Activated T-helper 2 cell treated with anti-CD3 and anti-CD28 coated beads, Interferon-gamma antibody, Interleukin-2, Interleukin-4, amounts not matched to agents 10 μg/mL and 5 μg/mL and 100 μg/mL, durations not matched to agents 14 hours and 24 hours and 36 hours (primary cell): ENCODE measurements at regions of chr19 and their contacts with region 1.

Region 1: DNA sequence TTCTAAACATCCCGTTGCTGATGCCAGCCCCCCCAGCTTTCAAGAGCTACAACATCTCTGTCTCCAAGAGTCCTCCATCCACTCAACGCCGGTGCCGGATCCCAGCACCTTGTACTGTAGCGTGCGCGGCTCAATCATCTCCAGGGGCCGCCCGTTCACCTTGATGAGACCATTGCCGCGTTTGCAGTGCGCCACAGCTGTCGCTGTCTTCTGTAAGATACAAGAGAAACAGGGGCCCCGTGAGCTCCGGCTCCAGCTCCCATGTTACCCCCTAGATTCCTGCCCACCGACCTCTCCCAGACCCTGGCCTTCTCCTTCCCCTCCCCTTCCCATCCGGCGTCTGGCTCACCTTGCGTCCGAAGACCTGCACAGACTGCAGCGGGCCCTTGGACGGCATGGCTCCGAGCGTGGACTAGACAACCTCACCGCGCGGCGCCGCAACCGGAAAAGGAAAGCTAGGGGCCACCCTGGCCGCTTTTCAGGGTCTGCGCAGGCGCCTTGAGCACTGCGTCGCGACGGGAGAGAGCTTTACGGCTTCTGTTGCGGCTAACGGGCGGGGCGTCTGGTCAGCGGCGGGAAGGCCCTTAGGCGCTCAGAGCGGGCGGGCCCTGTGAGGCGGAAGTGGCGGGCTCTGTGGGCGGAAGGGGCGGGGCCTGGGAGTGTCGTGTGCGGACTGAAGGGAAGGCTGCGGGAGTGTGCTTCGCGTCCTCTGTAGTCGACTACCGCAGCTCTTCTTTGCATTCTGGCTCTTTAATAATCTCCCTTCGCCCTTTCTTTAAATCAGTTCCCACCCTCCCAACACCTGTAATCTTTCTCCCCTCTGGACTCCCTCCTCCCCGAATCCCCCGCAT is at the start of gene RPS16:
- DNase-seq: peak; percentile 99
- H3K4me3 Mint-ChIP-seq: peak within 1 kb of the TSS; percentile 100
- H3K27ac Mint-ChIP-seq: peak within 1 kb of the TSS; percentile 99
- H3K4me1 Mint-ChIP-seq: peaks cover 40% of the 10 kb centered on the region
- H3K27me3 Mint-ChIP-seq: no peaks in the 10 kb centered on the region
- total RNA-seq, gene RPS16: 2,627 and 2,674 TPM in 2 replicates

Region 2: DNA sequence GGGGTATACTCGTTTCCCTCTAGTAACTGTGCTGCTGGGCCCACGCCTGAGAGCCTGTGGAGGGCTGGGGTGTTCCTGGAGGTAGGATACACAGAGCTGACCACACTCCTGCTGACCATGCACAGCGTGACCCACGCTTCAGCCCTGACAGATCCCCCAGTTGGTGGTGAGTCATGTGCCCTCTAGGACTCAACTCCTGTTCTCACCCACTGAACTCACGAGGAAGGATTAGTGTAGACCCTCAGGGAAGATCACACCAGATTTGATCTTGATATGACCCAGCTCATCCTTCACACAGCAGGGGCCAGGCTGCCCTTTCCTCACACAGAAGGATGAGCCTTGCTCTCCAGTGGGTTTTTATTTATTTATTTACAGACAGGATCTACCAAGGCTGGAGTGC is 364.8 kb before region 1 on chr19:
- intact Hi-C with region 1: no loop called
- DNase-seq: no peak
- H3K4me3 Mint-ChIP-seq: no peak overlapping the region
- H3K27ac Mint-ChIP-seq: no peak overlapping the region
- H3K4me1 Mint-ChIP-seq: peaks cover 11% of the 10 kb centered on the region
- H3K27me3 Mint-ChIP-seq: peaks cover 3% of the 10 kb centered on the region

Region 3: GRCh38 chr19:39390755-39391592 is 44.8 kb before region 1 on chr19 and contains the starts of genes MED29 and PAF1:
- intact Hi-C with region 1: loop called (anchors 1 kb)
- DNase-seq: peak; percentile 97
- H3K4me3 Mint-ChIP-seq: peak within 1 kb of the TSS; percentile 98
- H3K27ac Mint-ChIP-seq: peak within 1 kb of the TSS; percentile 96
- H3K4me1 Mint-ChIP-seq: peaks cover 22% of the 10 kb centered on the region
- H3K27me3 Mint-ChIP-seq: no peaks in the 10 kb centered on the region
- total RNA-seq, gene MED29: 32.3 and 34.7 TPM in 2 replicates
- total RNA-seq, gene PAF1: 49.5 and 51.1 TPM in 2 replicates

Region 4: DNA sequence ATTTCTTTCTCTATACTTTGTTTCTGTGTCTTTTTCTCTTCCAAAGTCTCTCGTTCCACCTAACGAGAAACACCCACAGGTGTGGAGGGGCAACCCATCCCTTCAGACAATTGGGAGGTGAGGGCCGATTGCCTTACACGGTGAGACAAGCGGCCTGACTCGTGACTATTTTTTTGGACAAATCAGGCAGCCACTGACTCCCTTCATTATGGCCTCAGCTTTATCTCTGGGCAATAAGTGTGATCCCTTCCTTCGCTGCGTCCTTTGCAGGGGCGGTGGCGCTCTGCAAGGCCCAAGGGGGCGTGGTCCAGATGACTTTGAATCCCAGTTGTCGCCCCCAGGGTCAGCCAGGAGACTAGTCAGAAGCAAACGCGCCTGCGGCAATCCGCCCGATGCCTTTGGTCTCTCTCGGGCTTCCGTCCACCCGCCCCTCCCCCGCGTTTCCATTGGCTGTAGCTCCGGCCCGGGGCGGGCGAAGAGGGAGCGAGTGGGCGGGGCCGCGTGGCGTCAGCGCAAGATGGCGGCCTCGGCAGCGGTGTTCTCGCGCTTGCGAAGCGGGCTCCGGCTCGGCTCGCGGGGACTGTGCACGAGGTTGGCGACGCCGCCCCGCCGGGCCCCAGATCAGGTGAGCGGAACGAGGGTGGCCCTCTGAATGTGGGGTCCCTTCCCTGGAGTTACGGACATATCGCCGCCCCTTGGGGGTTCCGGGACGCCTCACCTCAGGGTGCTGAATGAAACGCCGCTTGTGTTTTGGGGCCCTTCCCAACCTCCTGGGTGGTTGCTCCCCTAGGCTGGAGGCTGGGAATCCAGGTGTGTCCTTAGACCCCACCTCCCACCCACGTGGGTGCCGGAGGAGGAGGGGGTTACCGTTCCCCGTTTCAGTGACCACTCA is 44.9 kb after region 1 on chr19 and contains the start of gene TIMM50:
- intact Hi-C with region 1: loop called (anchors 2 kb)
- DNase-seq: peak; percentile 96
- H3K4me3 Mint-ChIP-seq: peak within 1 kb of the TSS; percentile 97
- H3K27ac Mint-ChIP-seq: peak within 1 kb of the TSS; percentile 84
- H3K4me1 Mint-ChIP-seq: peaks cover 24% of the 10 kb centered on the region
- H3K27me3 Mint-ChIP-seq: no peaks in the 10 kb centered on the region
- total RNA-seq, gene TIMM50: 110 and 115 TPM in 2 replicates

Region 5: DNA sequence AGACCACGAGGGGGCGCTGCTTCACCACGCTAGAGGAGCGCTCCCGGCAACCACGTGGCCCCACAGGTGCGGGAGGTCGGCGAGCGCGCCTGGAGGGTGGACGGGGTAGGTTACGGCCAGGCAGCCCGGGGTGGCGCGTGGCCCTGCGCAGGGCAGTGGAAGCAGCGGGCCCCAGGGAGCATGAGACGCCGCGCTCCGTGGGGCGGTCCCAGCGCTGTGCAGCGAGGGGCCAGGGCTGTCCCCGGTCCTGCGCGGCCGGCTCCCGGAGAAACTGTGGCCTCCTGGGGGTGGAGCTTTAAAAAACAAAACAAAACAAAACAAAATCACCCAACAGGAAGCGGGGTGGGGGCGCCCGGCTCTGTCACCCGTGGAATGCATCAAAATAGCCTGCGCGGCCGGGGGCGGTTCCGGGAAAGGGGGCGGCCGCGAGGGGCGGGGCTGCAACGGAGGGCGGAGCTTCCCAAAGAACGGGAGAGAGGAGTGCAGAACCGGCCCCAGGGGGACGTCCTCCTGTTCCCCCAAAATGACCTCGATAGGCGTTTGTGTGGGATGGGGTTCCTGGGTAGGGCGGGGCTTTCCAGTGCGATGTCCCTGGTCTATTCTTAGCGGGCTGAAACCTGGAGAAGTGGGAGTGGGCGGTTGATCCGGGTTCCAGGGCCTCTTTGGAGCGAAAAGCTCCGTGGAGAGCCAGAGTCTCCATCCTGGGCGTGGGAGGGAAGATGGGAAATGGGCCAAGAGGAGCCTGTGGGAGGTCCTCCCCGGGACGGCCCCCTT is 1227.4 kb after region 1 on chr19:
- intact Hi-C with region 1: no loop called
- DNase-seq: peak; percentile 85
- H3K4me3 Mint-ChIP-seq: peak overlapping the region; percentile 83
- H3K27ac Mint-ChIP-seq: peak overlapping the region; percentile 80
- H3K4me1 Mint-ChIP-seq: peaks cover 17% of the 10 kb centered on the region
- H3K27me3 Mint-ChIP-seq: no peaks in the 10 kb centered on the region